Activated CD4-positive, alpha-beta T cell treated with anti-CD3 and anti-CD28 coated beads for 36 hours (primary cell): ENCODE measurements at regions of chr3 and their contacts with region 1.

Region 1: DNA sequence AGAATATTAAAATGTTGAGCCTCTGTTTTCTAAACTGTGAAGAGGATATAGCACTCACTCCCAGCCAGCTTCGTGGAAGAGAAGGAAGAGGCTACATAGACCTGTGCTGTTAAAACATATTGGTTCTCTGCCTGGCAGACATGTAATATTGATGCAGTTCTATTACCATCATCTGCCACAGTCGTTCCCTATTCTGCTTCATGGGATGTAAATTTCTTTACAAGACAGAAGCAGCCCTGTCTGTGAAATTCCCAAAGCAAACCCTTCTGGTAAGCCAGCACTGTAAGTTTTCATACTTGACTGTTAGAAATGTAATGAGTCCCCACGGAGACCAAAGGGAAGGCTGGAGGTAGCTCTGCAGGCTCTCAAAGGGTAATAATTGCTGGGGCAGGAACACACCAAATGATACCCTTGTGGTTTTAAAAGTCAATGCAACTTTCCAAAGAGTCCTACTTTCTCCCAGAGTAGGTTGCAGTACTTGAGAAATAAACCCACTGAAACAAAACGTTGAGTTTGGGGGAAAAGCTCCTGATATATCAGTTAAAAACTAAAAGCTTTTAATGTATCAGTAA is 129.9 kb upstream of the HES1 start:
- DNase-seq: no peak
- ATAC-seq: no peak
- H3K4me3 Mint-ChIP-seq: no peak overlapping the region
- H3K27ac Mint-ChIP-seq: no peak overlapping the region
- H3K4me1 Mint-ChIP-seq: peaks cover 9% of the 10 kb centered on the region
- H3K27me3 Mint-ChIP-seq: peaks cover 20% of the 10 kb centered on the region

Region 2: DNA sequence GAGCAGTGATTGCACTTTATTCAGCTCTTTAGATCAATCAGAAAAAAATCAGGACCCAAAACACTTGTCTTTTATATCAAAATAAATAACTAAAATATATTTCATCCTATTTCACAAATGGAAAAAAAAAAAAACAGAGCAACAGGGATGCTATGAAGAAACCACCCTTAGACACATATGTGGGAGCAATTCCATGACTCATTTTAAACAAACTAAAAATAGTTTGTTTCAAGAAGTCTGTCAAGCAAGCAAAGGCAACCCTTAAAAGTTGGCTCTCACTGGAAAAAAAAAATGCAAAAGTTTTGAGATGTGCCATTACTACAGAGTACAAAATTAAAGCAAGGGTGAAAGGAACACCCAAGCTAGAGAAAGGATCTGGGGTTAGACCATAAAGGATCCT is 475.1 kb after region 1 on chr3:
- CTCF ChIA-PET with region 1: no interaction called
- POLR2A ChIA-PET with region 1: interaction called, 10 read pairs
- intact Hi-C with region 1: no loop called
- DNase-seq: no peak
- ATAC-seq: peak; percentile 16
- H3K4me3 Mint-ChIP-seq: peak overlapping the region; percentile 2
- H3K27ac Mint-ChIP-seq: peak overlapping the region; percentile 70
- H3K4me1 Mint-ChIP-seq: peaks cover 49% of the 10 kb centered on the region
- H3K27me3 Mint-ChIP-seq: no peaks in the 10 kb centered on the region